Dendritic cell treated with granulocyte-macrophage colony-stimulating factor and Interleukin-4, amounts not matched to agents 40 ng/mL and 50 ng/mL, for 4 days (primary cell): ENCODE measurements at regions of chr7 and their contacts with region 1.

Region 1: GRCh38 chr7:133746847-133747246 is 380.3 kb upstream of the LRGUK start:
- H3K4me3 Mint-ChIP-seq: no peak overlapping the region
- H3K27ac Mint-ChIP-seq: no peak overlapping the region
- H3K4me1 Mint-ChIP-seq: no peaks in the 10 kb centered on the region
- H3K27me3 Mint-ChIP-seq: no peaks in the 10 kb centered on the region

Region 2: GRCh38 chr7:133556048-133556447 is 190.8 kb before region 1 on chr7:
- intact Hi-C with region 1: loop called (anchors 5 kb)
- H3K4me3 Mint-ChIP-seq: no peak overlapping the region
- H3K27ac Mint-ChIP-seq: no peak overlapping the region
- H3K4me1 Mint-ChIP-seq: no peaks in the 10 kb centered on the region
- H3K27me3 Mint-ChIP-seq: no peaks in the 10 kb centered on the region

Region 3: GRCh38 chr7:133668296-133669060 is 78.4 kb before region 1 on chr7:
- intact Hi-C with region 1: no loop called
- H3K4me3 Mint-ChIP-seq: no peak overlapping the region
- H3K27ac Mint-ChIP-seq: no peak overlapping the region
- H3K4me1 Mint-ChIP-seq: no peaks in the 10 kb centered on the region
- H3K27me3 Mint-ChIP-seq: no peaks in the 10 kb centered on the region